ENCODE measurements at regions of chr4 and their contacts with region 1.

Region 1: DNA sequence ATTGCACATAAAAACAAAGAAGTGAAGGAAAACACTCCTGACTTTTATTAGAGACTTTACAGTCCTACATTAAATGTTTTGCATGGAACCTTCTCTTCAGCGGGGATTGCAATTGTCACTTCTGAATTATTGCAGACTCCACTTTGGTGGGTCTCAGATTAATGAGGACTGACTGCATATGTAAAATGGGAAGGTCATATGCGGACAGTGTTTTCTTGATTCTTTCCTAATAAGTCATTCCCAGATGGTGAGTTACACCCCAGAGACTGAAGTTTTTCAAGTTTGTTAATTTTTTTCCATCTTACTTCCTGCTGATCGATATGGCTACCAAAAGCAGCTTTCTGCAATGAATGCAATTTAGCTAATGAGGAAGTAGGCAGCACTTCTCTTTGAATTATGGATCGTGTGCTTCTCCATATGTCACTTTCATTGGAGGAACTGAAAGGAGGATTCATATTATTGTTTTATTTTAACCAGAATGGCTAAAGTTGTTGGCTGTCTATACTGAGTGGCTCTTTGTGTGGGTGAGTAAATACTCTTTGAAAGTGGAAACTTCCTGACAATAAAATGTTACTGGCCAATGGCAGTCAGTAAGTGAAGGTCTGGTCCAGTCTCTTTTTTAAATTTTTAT is 119.3 kb upstream of the CLNK start:
- DNase-seq: no peak

Region 2: DNA sequence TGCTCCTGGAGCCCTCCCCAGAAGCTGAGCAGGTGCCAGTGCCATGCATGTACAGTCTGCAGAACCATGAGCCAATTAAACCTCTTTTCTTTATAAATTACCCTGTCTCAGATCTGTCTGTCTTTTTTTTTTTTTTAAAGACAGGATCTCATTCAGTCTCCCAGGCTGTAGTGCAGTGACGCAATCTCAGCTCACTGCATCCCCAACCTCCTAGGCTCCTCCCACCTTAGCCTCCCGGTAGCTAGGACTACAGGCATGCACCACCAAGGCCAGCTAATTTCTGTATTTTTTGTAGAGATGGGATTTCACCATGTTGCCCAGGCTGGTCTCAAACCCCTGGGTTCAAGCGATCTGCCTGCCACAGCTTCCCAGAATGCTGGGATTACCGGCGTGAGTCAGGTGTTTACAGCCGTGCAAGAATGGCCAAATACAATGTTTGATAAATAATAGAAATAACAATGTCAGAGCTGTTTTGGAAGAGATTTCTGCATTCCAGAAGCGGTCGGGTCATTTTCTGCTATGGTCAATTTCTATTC is 851.3 kb before region 1 on chr4:
- intact Hi-C with region 1: loop called in 1 of 2 experiments (anchors 5 kb)
- DNase-seq: no peak

Region 3: GRCh38 chr4:10684631-10685030 is 119.2 kb before region 1 on chr4 and contains the start of gene CLNK:
- intact Hi-C with region 1: no loop called
- DNase-seq: no peak
- total RNA-seq, gene CLNK: 0.19 TPM